Mucosa of descending colon (tissue), 3 donors: ENCODE measurements at regions of chr18 and their contacts with region 1.

Region 1: GRCh38 chr18:3703732-3704176 is 253.8 kb downstream of the TGIF1 start:
- DNase-seq: peak in 2 of 3 donors; percentile 78 to 90
- ATAC-seq: peak; percentile 80
- H3K4me3 ChIP-seq: no peak overlapping the region
- H3K4me1 ChIP-seq: no peaks in the 10 kb centered on the region
- CTCF ChIP-seq: peak; percentile 49

Region 2: GRCh38 chr18:3652380-3653262 is 51.1 kb before region 1 on chr18:
- intact Hi-C with region 1: no loop called
- DNase-seq: peak in 2 of 3 donors; percentile 43 to 75
- ATAC-seq: peak; percentile 89
- H3K4me3 ChIP-seq: no peak overlapping the region
- H3K4me1 ChIP-seq: peaks cover 17% of the 10 kb centered on the region
- CTCF ChIP-seq: no peak

Region 3: DNA sequence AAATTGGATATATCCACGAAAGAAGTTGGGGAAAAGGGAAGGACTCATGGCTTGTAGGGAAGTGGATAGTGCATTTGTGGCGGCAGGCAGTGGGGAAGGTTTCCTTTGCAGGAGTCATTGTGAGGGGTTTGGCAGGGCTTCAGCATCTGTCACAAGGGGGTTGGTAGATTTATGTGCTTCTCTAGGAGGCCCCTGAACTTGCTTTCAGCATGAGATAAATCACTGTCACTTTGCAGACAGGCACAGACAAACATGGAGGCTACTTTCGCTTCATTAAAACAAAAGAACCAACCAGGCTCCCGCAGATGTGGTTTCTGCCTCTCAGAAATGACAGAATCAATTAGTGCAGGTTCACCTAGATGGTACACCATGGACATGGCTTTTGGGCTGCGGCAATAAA is 86.9 kb after region 1 on chr18:
- intact Hi-C with region 1: no loop called
- DNase-seq: no peak
- ATAC-seq: no peak
- H3K4me3 ChIP-seq: no peak overlapping the region
- H3K4me1 ChIP-seq: no peaks in the 10 kb centered on the region
- CTCF ChIP-seq: no peak

Region 4: DNA sequence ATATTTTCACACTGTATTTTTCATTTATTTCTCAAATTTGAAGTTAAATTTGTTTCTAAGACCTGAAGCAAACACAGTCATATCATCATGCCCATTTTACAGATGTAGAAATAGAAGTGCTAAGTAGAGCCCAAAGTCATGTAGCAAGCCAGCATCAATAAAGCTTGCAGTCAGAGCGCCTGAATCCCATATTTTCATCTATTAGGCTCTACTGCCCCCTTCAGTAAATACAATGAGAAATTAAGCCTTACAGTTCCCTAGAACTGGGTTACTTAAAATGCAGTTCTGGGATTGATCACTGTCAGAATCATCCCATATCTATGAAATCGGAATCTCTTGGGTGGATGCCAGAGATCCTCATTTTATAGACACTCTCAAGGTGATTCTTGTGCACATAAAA is 166.1 kb after region 1 on chr18:
- intact Hi-C with region 1: loop called in 1 of 2 experiments (anchors 10 kb)
- DNase-seq: no peak
- ATAC-seq: peak; percentile 45
- H3K4me3 ChIP-seq: no peak overlapping the region
- H3K4me1 ChIP-seq: no peaks in the 10 kb centered on the region
- CTCF ChIP-seq: no peak